Activated CD4-positive, alpha-beta T cell treated with anti-CD3 and anti-CD28 coated beads, Interleukin-2, amount 10 ng/mL, durations not matched to agents 7 days and 5 days (primary cell): ENCODE measurements at regions of chr15 and their contacts with region 1.

Region 1: GRCh38 chr15:60916679-60917460 is 312.2 kb downstream of the RORA start:
- DNase-seq: peak; percentile 89
- H3K4me3 Mint-ChIP-seq: no peak overlapping the region
- H3K27ac Mint-ChIP-seq: peak overlapping the region; percentile 6
- H3K4me1 Mint-ChIP-seq: peaks cover 15% of the 10 kb centered on the region
- H3K27me3 Mint-ChIP-seq: peaks cover 3% of the 10 kb centered on the region

Region 2: DNA sequence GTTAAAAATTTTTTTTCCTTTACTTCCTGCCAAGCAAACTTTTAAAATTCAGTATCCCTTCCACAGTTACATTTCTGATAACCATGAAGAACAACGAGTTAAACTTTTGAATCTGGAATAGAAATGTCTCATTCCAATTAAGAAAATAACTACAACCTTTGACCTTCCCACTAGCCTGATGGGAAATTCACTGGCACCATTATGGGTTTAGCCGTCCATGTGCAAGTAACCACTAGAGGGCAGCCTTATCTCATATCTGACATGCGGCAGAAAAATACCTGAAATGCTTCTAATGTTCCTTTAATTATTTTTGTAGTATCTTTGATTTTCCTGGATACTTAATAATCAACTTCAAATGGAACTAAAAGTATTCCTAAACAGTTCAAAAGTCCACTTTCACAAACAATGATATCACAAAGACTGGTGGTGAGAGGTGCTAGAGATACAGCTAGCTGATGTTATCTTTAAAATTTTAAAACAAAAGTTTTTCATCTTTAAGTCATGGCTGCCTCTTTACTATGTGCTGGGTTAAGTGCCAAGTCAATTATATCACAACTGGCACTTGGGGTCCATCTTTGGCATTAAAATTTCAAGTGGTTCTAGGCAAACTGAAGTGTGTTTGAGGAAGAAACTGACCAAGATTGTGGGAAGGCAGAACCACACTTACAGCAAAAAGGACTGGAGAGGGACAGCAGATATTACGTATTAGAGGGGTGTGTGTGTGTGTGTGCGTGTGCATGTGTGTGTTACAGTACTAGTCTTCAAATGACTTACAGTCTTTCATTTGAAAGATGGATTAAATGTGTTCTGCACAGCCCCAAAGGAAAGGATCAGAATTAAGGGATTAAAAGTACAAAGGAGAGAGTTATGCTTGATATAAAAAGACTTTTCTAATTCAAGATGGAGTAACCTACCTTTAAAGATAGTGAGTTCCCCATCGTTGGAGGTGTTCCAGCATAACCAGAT is 330.8 kb before region 1 on chr15:
- CTCF ChIA-PET with region 1: interaction called, 10 read pairs
- POLR2A ChIA-PET with region 1: interaction called, 3 read pairs
- DNase-seq: peak; percentile 76
- H3K4me3 Mint-ChIP-seq: peak overlapping the region; percentile 62
- H3K27ac Mint-ChIP-seq: peak overlapping the region; percentile 95
- H3K4me1 Mint-ChIP-seq: peaks cover 87% of the 10 kb centered on the region
- H3K27me3 Mint-ChIP-seq: peaks cover 2% of the 10 kb centered on the region

Region 3: GRCh38 chr15:60592371-60593169 is 324.3 kb before region 1 on chr15:
- CTCF ChIA-PET with region 1: interaction called, 10 read pairs
- POLR2A ChIA-PET with region 1: no interaction called
- DNase-seq: peak; percentile 87
- H3K4me3 Mint-ChIP-seq: peak overlapping the region; percentile 77
- H3K27ac Mint-ChIP-seq: peak overlapping the region; percentile 85
- H3K4me1 Mint-ChIP-seq: peaks cover 55% of the 10 kb centered on the region
- H3K27me3 Mint-ChIP-seq: peaks cover 17% of the 10 kb centered on the region

Region 4: DNA sequence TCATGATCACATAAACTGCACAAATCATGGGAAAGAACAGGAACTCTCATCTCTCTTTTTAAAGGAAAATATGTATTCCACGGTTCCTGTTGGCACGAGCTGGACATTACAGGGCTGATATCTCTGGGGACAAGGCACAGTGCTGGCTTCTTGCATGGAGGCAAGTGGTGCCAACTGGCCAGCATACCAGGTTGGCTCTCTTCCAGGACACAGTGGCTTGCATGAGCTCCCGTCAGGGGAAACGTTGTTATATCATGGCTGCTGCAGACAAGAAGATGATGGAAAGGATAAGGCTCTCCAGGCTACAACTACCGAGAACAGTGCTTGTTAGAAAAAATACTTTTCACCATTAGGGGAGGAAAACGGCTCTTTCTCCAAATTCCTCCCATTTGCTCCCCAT is 28.3 kb after region 1 on chr15:
- CTCF ChIA-PET with region 1: no interaction called
- POLR2A ChIA-PET with region 1: no interaction called
- DNase-seq: no peak
- H3K4me3 Mint-ChIP-seq: no peak overlapping the region
- H3K27ac Mint-ChIP-seq: no peak overlapping the region
- H3K4me1 Mint-ChIP-seq: peaks cover 2% of the 10 kb centered on the region
- H3K27me3 Mint-ChIP-seq: peaks cover 14% of the 10 kb centered on the region